Activated CD8-positive, alpha-beta T cell treated with anti-CD3 and anti-CD28 coated beads for 36 hours (primary cell): ENCODE measurements at regions of chr6 and their contacts with region 1.

Region 1: GRCh38 chr6:96897383-96898240 is at the start of gene NDUFAF4:
- DNase-seq: peak; percentile 97
- ATAC-seq: peak; percentile 94
- H3K4me3 Mint-ChIP-seq: peak within 1 kb of the TSS; percentile 73
- H3K27ac Mint-ChIP-seq: peak within 1 kb of the TSS; percentile 79
- H3K4me1 Mint-ChIP-seq: peaks cover 25% of the 10 kb centered on the region
- H3K27me3 Mint-ChIP-seq: peaks cover 12% of the 10 kb centered on the region
- CTCF ChIP-seq: peak; percentile 86
- total RNA-seq, gene NDUFAF4: 62.5 to 64.6 TPM

Region 2: DNA sequence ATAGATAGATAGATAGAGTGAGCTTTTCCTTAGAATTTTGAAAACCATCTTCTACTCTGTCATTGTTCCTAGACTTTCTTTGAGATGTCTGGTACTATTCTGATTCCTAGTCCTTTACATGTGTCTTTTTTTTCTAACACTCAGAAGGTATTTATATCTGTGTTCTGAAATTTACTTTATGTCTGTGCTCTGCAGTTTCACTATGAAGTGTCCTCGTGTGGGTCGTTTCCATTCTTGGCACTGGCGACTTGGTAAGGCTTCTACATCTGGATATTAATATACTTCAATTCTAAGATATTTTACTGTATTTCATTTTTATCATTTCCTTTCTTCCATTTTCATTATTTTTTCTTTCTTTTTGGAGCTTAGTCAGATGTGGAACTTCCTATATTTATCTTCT is 247.7 kb before region 1 on chr6:
- CTCF ChIA-PET with region 1: no interaction called
- POLR2A ChIA-PET with region 1: no interaction called
- intact Hi-C with region 1: no loop called
- DNase-seq: no peak
- ATAC-seq: no peak
- H3K4me3 Mint-ChIP-seq: no peak overlapping the region
- H3K27ac Mint-ChIP-seq: no peak overlapping the region
- H3K4me1 Mint-ChIP-seq: peaks cover 4% of the 10 kb centered on the region
- H3K27me3 Mint-ChIP-seq: peaks cover 18% of the 10 kb centered on the region
- CTCF ChIP-seq: no peak

Region 3: GRCh38 chr6:96837081-96837971 is 60.3 kb before region 1 on chr6 and contains the start of gene GPR63:
- CTCF ChIA-PET with region 1: interaction called, 5 read pairs
- POLR2A ChIA-PET with region 1: no interaction called
- intact Hi-C with region 1: loop called (anchors 5 kb)
- DNase-seq: peak; percentile 78
- ATAC-seq: peak; percentile 94
- H3K4me3 Mint-ChIP-seq: peak within 1 kb of the TSS; percentile 86
- H3K27ac Mint-ChIP-seq: peak within 1 kb of the TSS; percentile 63
- H3K4me1 Mint-ChIP-seq: peaks cover 8% of the 10 kb centered on the region
- H3K27me3 Mint-ChIP-seq: peaks cover 59% of the 10 kb centered on the region
- CTCF ChIP-seq: no peak
- total RNA-seq, gene GPR63: 0.69 to 0.92 TPM

Region 4: DNA sequence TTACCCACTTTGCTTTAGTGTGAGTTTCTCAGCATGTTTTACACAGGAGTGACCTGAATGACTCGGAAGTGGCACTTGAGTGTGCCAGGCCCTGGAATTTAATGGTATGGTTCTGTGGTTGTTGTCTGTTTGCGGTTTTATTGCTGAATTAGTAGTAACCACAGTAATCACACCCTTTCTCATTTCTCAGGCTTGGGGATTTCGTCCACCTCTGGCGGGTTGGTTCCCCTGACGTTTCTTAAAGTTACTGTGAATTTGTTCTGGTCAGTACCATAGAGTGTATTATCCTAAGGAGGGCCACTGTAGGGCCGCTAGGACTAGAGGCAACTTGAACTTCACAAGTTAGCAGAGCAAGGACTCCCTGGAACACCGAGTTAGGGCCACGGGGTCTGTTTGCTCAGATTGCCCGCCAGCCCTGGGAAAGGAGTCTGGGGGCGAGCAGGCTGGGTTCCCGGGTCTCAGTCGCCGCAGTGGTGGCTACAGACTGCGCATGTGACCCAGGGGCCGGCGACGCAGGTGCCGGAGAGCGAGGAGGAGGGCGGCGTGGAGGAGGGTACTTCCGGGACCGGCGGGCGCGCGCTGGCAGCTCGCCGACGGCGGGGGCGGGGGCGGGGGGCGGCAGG is 26.4 kb after region 1 on chr6:
- CTCF ChIA-PET with region 1: interaction called, 22 read pairs
- POLR2A ChIA-PET with region 1: interaction called, 4 read pairs
- intact Hi-C with region 1: loop called (anchors 2 kb)
- DNase-seq: no peak
- ATAC-seq: peak; percentile 22
- H3K4me3 Mint-ChIP-seq: peak overlapping the region; percentile 85
- H3K27ac Mint-ChIP-seq: peak overlapping the region; percentile 85
- H3K4me1 Mint-ChIP-seq: peaks cover 33% of the 10 kb centered on the region
- H3K27me3 Mint-ChIP-seq: no peaks in the 10 kb centered on the region
- CTCF ChIP-seq: no peak

Region 5: DNA sequence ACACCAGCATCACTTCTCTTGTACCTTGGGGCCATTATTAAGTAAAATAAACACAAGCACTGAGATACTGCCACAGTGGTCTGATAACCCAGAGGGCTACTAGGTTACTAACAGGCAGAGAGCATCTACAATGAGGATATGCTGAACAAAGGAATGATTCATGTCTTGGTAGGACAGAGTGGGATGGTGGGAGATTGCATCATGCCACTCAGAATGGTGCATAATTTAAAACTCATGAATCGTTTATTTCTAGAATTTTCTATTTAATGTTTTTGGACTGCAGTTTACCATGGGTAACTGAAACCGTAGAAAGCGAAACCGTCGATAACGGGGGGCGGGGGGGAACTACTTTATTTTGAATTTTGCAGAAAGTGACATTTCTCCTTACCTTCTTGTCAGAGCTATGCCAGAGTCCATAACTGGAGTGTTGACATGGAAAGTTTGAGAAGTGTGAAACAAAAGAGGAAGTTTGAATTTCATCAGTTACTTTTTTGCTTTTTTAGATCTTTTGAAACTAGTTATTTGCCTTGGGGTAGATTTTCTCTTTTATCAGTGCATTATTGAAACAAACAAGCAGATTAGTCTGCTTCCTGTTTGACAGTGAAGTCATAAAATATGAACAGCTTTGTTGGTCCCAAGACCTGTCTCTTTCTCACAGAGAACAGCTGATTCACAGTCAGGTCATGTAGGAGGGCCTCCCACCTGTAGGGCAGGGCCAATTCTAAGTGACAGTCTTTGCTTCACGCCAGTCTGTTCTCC is 151.8 kb after region 1 on chr6:
- CTCF ChIA-PET with region 1: interaction called, 5 read pairs
- POLR2A ChIA-PET with region 1: no interaction called
- intact Hi-C with region 1: loop called (anchors 5 kb)
- DNase-seq: peak; percentile 40
- ATAC-seq: peak; percentile 84
- H3K4me3 Mint-ChIP-seq: peak overlapping the region; percentile 7
- H3K27ac Mint-ChIP-seq: peak overlapping the region; percentile 72
- H3K4me1 Mint-ChIP-seq: peaks cover 15% of the 10 kb centered on the region
- H3K27me3 Mint-ChIP-seq: no peaks in the 10 kb centered on the region
- CTCF ChIP-seq: no peak

Region 6: DNA sequence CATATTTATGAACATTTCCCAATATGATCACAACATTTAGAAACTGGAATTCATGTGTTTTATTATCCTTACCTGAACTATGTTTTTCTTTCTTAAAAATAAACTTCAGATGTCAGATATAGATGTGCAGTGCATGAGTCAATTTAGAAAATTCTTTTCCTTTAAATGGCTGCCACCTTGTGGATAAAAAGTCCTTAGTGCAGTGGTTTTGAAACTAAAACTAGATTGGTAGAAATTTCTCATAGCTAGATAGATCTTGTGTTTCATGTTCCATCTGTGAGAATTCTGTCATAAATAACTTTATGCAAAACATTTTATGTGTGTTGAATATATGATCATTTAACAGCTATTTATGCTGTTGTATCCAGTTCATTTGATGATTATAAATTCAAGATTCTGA is 161.9 kb after region 1 on chr6:
- CTCF ChIA-PET with region 1: interaction called, 62 read pairs
- POLR2A ChIA-PET with region 1: no interaction called
- intact Hi-C with region 1: no loop called
- DNase-seq: no peak
- ATAC-seq: peak; percentile 76
- H3K4me3 Mint-ChIP-seq: no peak overlapping the region
- H3K27ac Mint-ChIP-seq: no peak overlapping the region
- H3K4me1 Mint-ChIP-seq: peaks cover 2% of the 10 kb centered on the region
- H3K27me3 Mint-ChIP-seq: no peaks in the 10 kb centered on the region
- CTCF ChIP-seq: peak; percentile 63

Region 7: DNA sequence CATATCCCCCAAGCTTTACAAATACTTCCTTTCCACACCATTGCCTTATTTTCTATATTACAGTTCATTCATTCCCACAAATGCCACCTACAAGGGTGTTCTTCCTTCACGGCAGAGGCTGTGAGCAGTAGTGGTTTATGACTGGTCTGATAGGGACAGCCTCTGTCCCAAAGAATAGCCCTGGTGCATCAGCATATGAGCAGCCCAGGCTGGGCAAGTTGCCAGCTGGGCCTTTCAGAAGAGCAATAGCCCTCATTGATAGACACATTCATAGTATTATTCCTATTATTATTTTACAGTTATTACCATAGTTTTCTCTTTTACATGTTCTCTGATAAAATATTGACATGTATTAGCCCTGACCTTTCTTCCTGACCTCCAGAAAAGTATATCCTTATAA is 235.5 kb after region 1 on chr6:
- CTCF ChIA-PET with region 1: no interaction called
- POLR2A ChIA-PET with region 1: no interaction called
- intact Hi-C with region 1: no loop called
- DNase-seq: no peak
- ATAC-seq: no peak
- H3K4me3 Mint-ChIP-seq: no peak overlapping the region
- H3K27ac Mint-ChIP-seq: no peak overlapping the region
- H3K4me1 Mint-ChIP-seq: peaks cover 6% of the 10 kb centered on the region
- H3K27me3 Mint-ChIP-seq: no peaks in the 10 kb centered on the region
- CTCF ChIP-seq: no peak

Region 8: GRCh38 chr6:97282726-97283617 is 385.4 kb after region 1 on chr6 and contains the start of gene MMS22L:
- CTCF ChIA-PET with region 1: no interaction called
- POLR2A ChIA-PET with region 1: no interaction called
- intact Hi-C with region 1: loop called (anchors 10 kb)
- DNase-seq: peak; percentile 96
- ATAC-seq: peak; percentile 99
- H3K4me3 Mint-ChIP-seq: peak within 1 kb of the TSS; percentile 81
- H3K27ac Mint-ChIP-seq: peak within 1 kb of the TSS; percentile 90
- H3K4me1 Mint-ChIP-seq: peaks cover 15% of the 10 kb centered on the region
- H3K27me3 Mint-ChIP-seq: no peaks in the 10 kb centered on the region
- CTCF ChIP-seq: no peak
- total RNA-seq, gene MMS22L: 34.1 to 34.7 TPM